H1 (cell line): ENCODE measurements at regions of chr13 and their contacts with region 1.

Region 1: GRCh38 chr13:24727731-24728601 is 36.0 kb upstream of the RNF17 start:
- DNase-seq: peak in 1 of 2 experiments; percentile 63
- H3K4me3 ChIP-seq: no peak overlapping the region
- H3K27ac ChIP-seq: no peak overlapping the region
- H3K4me1 ChIP-seq: no peaks in the 10 kb centered on the region
- H3K27me3 ChIP-seq: no peaks in the 10 kb centered on the region
- CTCF ChIP-seq: peak; percentile 78 to 99 (median 78)
- EP300 ChIP-seq: no peak
- POLR2A ChIP-seq: no peak
- RAD21 ChIP-seq: peak; percentile 90 to 91

Region 2: DNA sequence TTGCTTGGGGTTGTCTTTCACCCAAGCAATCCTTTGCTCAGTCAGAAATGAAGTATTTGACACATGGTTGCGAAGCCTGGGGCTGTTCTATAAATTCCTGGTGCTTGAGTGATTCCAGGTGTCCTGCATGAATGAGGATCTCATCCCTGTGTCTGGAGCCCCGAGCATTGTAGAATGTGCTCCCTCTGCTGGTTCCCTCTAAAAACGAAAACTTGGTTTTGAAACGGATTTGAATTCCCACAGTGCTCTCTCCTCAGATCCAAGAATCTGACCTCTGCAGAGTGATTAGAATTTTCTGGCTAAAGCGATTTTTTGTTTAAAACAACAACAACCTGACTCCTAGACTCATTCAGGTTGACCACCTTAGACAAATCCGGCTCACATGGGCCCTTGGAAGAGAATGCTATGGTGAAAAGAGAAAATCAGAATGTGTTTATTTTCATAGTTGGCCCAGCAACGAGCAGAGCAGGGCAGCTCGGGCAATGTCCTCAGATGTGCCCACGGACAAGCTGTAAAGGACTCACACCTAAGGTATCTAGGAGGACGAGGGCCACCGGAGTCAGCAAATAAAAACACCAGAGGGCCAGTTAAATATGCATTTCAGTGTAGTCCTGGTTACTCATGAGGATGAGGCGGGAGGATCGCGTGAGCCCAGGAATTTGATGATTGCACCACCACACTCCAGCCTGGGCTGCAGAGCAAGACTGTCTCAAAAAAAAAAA is 56.4 kb before region 1 on chr13:
- CTCF ChIA-PET with region 1: interaction called, 19 read pairs
- POLR2A ChIA-PET with region 1: no interaction called
- DNase-seq: no peak
- H3K4me3 ChIP-seq: peak overlapping the region in 1 of 4 experiments; percentile 41; a peak in 3 of 8 replicates
- H3K27ac ChIP-seq: no peak overlapping the region
- H3K4me1 ChIP-seq: peaks cover 0 to 4% (median under 1%) of the 10 kb centered on the region in 4 experiments; a peak in 2 of 7 replicates
- H3K27me3 ChIP-seq: no peaks in the 10 kb centered on the region
- CTCF ChIP-seq: peak; percentile 17 to 79 (median 75)
- EP300 ChIP-seq: no peak
- POLR2A ChIP-seq: no peak
- RAD21 ChIP-seq: peak; percentile 57 to 67

Region 3: GRCh38 chr13:24683838-24684599 is 43.9 kb before region 1 on chr13:
- CTCF ChIA-PET with region 1: interaction called, 30 read pairs
- POLR2A ChIA-PET with region 1: no interaction called
- DNase-seq: peak in 1 of 2 experiments; percentile 88
- H3K4me3 ChIP-seq: peak overlapping the region in 1 of 4 experiments; percentile 11; a peak in 1 of 8 replicates
- H3K27ac ChIP-seq: no peak overlapping the region
- H3K4me1 ChIP-seq: peaks cover 8 to 14% (median 12%) of the 10 kb centered on the region in 4 experiments
- H3K27me3 ChIP-seq: peaks cover 3 to 22% (median 18%) of the 10 kb centered on the region in 4 experiments
- CTCF ChIP-seq: peak; percentile 80 to 96 (median 80)
- EP300 ChIP-seq: no peak
- POLR2A ChIP-seq: no peak
- RAD21 ChIP-seq: peak; percentile 58 to 69

Region 4: DNA sequence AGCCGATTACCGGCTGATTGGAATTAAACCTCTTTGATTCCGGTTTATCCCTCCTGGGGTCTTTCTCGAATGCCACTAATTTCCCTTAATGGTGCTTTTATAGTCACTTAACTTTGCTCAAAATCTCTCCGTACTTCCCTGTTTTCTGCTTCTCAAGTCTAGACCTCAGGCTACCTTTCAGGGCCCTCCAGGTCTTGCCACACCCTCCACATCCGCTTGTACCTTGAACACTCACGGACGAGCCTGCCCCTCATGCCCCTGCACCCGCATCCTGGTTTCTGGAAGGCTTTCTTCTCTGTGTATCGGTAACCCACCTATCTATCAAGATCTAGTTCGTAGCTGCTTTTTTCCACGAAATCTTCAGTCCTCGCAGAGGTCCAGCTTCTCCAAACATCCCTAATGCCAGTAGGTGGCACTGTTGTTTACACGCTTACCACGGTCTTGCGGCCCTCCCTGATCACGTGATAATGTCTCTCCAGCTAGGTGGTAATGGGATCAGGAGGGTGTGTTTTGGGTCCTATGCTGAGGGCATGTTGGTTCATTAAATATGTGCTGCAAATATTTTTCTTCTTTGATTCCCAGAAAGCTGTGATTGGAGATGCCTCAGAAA is 34.0 kb before region 1 on chr13:
- CTCF ChIA-PET with region 1: interaction called, 67 read pairs
- POLR2A ChIA-PET with region 1: no interaction called
- DNase-seq: peak in 1 of 2 experiments; percentile 75
- H3K4me3 ChIP-seq: no peak overlapping the region
- H3K27ac ChIP-seq: no peak overlapping the region
- H3K4me1 ChIP-seq: no peaks in the 10 kb centered on the region; a peak in 1 of 7 replicates
- H3K27me3 ChIP-seq: no peaks in the 10 kb centered on the region
- CTCF ChIP-seq: peak; percentile 75 to 93 (median 82)
- EP300 ChIP-seq: no peak
- POLR2A ChIP-seq: no peak
- RAD21 ChIP-seq: peak; percentile 81 to 88

Region 5: DNA sequence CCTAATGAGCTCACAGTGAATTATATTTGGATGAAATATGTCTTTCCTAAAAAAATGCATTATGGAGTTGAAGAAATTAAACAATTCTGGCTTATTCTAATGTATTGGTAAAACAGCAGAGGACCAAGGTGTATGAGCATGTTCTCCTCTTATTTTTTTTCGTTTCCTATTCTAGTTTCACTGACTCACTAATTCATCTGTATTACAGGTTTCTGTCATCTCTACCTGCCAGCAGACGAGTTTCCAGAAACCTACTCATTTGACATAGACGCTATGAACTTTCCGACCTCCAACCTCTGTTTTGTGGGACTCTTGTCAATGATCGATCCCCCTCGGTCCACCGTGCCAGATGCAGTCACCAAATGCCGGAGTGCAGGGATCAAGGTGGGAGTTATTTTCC is 27.4 kb before region 1 on chr13:
- CTCF ChIA-PET with region 1: interaction called, 11 read pairs
- POLR2A ChIA-PET with region 1: no interaction called
- DNase-seq: no peak
- H3K4me3 ChIP-seq: no peak overlapping the region
- H3K27ac ChIP-seq: no peak overlapping the region
- H3K4me1 ChIP-seq: no peaks in the 10 kb centered on the region; a peak in 1 of 7 replicates
- H3K27me3 ChIP-seq: no peaks in the 10 kb centered on the region
- CTCF ChIP-seq: no peak
- EP300 ChIP-seq: no peak
- POLR2A ChIP-seq: no peak
- RAD21 ChIP-seq: no peak

Region 6: GRCh38 chr13:24709186-24709913 is 18.6 kb before region 1 on chr13:
- CTCF ChIA-PET with region 1: interaction called, 95 read pairs
- POLR2A ChIA-PET with region 1: no interaction called
- DNase-seq: no peak
- H3K4me3 ChIP-seq: no peak overlapping the region
- H3K27ac ChIP-seq: no peak overlapping the region
- H3K4me1 ChIP-seq: no peaks in the 10 kb centered on the region
- H3K27me3 ChIP-seq: no peaks in the 10 kb centered on the region
- CTCF ChIP-seq: no peak
- EP300 ChIP-seq: no peak
- POLR2A ChIP-seq: no peak
- RAD21 ChIP-seq: 0 out of 4 replicates have a peak, but pooled peaks of 1 of the 2 experiments have one; percentile 1

Region 7: DNA sequence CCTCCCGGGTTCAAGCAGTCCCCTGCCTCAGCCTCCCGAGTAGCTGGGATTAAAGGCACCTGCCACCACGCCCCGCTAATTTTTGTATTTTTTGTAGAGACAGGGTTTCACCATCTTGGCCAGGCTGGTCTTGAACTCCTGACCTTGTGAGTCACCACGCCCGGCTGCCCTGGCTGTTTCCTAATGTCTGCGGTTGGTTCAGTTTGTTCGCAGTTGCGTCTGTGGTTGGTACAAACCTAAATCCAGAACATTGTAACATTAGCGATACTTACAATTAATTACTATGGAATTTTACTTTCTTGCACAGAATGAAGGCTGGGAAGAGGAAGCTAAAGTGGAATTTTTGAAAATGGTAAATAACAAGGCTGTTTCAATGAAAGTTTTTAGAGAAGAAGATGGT is 74.1 kb after region 1 on chr13:
- CTCF ChIA-PET with region 1: no interaction called
- POLR2A ChIA-PET with region 1: no interaction called
- DNase-seq: no peak
- H3K4me3 ChIP-seq: no peak overlapping the region
- H3K27ac ChIP-seq: no peak overlapping the region
- H3K4me1 ChIP-seq: no peaks in the 10 kb centered on the region
- H3K27me3 ChIP-seq: no peaks in the 10 kb centered on the region
- CTCF ChIP-seq: no peak
- EP300 ChIP-seq: no peak
- POLR2A ChIP-seq: no peak
- RAD21 ChIP-seq: no peak

Region 8: DNA sequence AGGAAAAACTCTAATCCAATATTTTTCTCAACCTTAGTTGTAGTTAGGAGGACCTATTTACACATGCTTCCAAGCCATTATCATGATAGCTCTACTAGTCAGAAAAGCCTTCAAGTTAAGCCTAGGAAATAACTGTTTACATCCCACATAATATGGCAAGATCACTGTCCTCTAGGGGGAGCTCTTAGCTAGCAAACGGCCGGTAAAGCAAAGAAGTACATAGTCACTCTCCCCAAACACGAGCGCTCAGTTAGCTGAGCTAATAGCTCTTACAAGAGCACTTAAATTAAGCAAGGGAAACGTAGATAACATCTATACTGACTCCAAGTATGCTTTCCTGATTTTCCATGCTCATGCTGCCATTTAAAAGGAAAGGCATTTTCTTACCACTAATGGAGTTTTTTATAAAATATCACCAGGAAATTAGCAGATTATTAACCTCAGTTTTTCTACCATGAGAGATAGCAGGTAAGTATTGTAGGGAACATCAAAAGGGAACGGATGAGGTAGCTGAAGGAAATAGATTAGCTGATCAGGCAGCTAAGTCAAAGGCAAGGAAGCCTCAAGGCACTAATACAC is 267.3 kb after region 1 on chr13:
- CTCF ChIA-PET with region 1: no interaction called
- POLR2A ChIA-PET with region 1: no interaction called
- DNase-seq: peak in 1 of 2 experiments; percentile 55
- H3K4me3 ChIP-seq: no peak overlapping the region
- H3K27ac ChIP-seq: no peak overlapping the region
- H3K4me1 ChIP-seq: no peaks in the 10 kb centered on the region; a peak in 1 of 7 replicates
- H3K27me3 ChIP-seq: no peaks in the 10 kb centered on the region
- CTCF ChIP-seq: peak in 2 of 3 experiments; percentile 79 to 81; a peak in 3 of 4 replicates
- EP300 ChIP-seq: no peak
- POLR2A ChIP-seq: no peak
- RAD21 ChIP-seq: peak; percentile 78 to 85